Mammary epithelial cell (primary cell): ENCODE measurements at regions of chr5 and their contacts with region 1.

Region 1: DNA sequence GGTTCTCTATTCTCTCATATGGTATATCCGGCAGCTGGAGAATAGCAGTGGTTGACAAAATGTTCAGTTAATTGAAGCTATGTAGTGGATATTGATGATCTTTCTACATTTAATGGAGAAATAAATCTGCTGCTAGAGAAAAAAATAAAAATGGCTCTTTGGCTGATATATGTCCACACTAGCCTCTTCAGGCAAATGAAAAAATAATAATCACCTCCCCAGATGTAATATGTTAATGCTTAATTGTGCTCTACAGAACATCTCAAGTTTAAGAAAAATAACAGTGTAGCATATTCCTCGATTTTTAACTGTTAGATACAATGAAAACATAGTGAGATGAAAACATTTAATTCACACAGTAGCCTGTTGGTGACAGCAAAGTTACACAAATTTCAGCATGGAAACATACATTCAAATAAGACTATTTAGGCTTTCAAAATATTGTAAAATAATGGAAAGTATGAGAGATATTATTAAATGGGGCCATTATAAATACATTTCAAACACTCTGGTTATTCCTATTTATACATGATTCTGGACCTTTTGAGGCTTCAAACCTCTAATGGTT is 543.0 kb downstream of the MAT2B start:
- DNase-seq: no peak
- H3K4me3 ChIP-seq: no peak overlapping the region
- H3K27ac ChIP-seq: no peak overlapping the region
- H3K4me1 ChIP-seq: no peaks in the 10 kb centered on the region
- H3K27me3 ChIP-seq: no peaks in the 10 kb centered on the region
- CTCF ChIP-seq: peak; percentile 33 to 46

Region 2: DNA sequence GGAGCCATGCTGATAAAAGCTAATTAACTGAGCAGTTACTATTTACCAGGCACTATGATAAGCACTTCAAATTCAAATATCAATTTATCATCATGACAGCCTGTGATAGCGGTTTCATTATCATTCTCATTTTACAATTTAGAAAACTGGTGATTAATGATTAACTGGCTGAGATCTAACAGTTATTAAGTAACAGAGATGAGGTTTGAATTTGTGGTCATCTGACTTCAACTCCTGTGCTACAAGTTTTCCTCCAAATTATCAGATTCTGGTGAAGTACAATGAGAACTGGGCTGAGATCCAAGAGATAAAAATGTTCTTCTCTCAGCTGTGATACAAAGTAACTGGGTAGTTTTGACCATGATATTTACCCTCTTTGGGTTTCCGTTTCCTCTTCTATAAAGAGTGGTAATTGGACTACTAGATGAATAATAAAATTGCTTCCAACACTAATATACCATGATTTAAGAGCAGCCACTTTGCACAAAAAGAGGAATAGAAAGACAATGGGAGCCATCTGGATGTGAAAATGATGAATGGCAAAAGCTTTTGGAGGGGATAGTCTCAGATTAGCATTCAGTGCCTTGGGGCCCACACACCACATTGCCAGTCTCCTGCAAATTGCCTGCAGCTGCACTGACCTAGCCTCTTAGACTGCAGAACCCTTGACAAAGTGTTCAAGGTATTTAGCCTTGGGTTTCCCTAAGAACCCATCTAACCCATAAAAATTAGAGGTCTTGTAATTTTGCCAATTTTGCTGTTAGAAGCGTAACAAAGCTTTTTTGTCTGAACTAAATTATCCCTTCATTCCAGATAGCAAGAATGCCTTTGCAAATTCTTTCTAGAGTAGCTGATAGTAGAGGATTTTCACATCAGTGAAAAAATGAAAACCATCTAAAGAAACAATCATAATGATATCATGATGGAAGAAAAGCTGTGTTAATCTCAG is 685.3 kb before region 1 on chr5:
- CTCF ChIA-PET with region 1: no interaction called
- dilution Hi-C with region 1: no loop called
- in situ Hi-C with region 1: no loop called
- intact Hi-C with region 1: no loop called
- DNase-seq: no peak
- H3K4me3 ChIP-seq: no peak overlapping the region
- H3K27ac ChIP-seq: no peak overlapping the region
- H3K4me1 ChIP-seq: no peaks in the 10 kb centered on the region
- H3K27me3 ChIP-seq: no peaks in the 10 kb centered on the region
- CTCF ChIP-seq: no peak

Region 3: DNA sequence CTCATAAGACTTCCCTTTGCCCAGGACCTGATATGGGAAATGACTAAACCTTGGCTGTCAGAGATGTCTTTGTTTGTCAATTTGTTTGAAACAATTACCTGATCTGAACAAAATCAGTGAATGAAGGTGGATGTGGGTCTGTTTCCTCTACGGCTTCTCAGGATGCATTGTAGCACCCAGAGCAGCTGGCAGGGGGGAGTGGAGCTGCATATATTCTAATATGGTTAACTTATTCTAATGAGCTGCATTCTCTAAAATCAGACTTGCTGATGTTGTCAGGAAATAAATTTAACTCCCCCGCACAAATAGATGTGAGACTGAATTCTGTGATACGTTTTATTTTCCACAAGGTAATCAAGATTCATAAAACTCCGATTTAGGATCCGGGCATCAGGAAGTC is 122.4 kb after region 1 on chr5:
- CTCF ChIA-PET with region 1: no interaction called
- dilution Hi-C with region 1: no loop called
- in situ Hi-C with region 1: no loop called
- intact Hi-C with region 1: no loop called
- DNase-seq: no peak
- H3K4me3 ChIP-seq: no peak overlapping the region
- H3K27ac ChIP-seq: no peak overlapping the region
- H3K4me1 ChIP-seq: no peaks in the 10 kb centered on the region
- H3K27me3 ChIP-seq: no peaks in the 10 kb centered on the region
- CTCF ChIP-seq: no peak

Region 4: GRCh38 chr5:164475339-164475977 is 427.0 kb after region 1 on chr5:
- CTCF ChIA-PET with region 1: no interaction called
- dilution Hi-C with region 1: no loop called
- in situ Hi-C with region 1: loop called in 1 of 2 experiments (anchors 25 kb)
- intact Hi-C with region 1: loop called (anchors 1 kb)
- DNase-seq: peak; percentile 3
- H3K4me3 ChIP-seq: no peak overlapping the region
- H3K27ac ChIP-seq: no peak overlapping the region
- H3K4me1 ChIP-seq: no peaks in the 10 kb centered on the region
- H3K27me3 ChIP-seq: no peaks in the 10 kb centered on the region
- CTCF ChIP-seq: peak; percentile 70 to 82